ENCODE measurements at regions of chr5 and their contacts with region 1.

Region 1: DNA sequence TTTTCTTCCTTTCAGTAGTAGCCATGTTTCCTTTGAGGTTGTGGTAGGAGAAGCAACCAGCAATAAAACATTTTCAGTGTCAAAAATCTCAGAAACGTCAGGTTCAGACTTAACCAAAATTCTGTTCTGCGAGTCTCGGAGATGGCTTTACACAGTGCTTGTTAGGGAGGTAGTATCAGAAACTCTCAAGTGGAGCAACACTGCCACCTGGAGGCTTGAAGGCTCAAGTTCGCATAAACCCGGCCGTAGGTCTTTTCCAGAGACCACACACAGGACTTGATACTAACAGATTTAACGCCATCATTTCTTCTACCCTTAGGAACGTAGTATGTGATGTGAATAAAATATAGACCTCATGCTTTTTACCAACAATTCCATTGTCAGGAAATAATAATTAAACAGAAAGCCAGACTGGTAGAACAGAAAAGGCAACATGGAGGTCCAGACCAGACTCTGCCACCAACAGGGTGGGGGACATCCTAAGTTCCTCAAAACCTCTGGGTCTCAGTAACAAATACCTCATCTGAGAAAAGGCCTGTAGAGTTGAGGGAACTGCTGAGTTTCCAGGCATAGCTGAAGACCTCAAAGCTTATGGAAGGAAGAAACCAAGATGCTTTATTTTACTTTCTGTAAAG is 8.5 kb downstream of the PTGER4 start:
- DNase-seq: peak; percentile 60 to 89
- ATAC-seq: peak; percentile 89 to 96 (median 92)
- H3K4me3 ChIP-seq: peak overlapping the region in 7 of 10 donors; percentile 77 to 98 (median 93)
- H3K27ac ChIP-seq: peak overlapping the region in 9 of 10 donors; percentile 15 to 96 (median 44)
- H3K4me1 ChIP-seq: peaks cover 0 to 68% (median 45%) of the 10 kb centered on the region in 9 donors
- H3K27me3 ChIP-seq: peaks cover 0 to 5% (median 0%) of the 10 kb centered on the region in 7 donors
- CTCF ChIP-seq: peak; percentile 78 to 93 (median 87)

Region 2: DNA sequence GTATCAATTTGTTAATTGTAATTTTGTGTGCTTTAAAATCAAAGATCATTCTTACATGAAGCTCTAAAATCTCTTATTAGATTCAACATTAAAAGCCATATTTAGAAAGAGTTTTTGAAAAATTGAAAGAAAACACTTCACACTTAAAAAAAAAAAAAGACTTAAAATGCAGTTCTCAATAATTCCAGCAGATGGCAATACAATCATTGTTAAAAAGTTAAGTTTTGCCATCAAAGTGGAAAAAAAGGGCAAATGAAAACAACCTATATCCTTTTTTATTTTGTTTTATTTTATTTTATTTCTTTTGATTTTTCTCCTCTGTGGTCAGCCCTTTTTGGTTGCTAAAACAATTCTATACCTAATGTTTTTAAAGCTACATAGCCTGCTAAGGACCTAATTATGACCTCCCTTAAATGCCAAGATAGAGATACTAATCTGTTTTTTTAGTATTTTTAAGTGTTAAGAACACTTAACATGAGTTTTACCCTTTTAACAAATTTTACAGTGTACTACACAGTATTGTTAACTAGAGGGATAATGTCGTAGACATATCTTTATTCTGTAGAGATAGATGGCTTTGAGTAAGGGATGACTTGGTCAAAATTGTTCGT is 1109.3 kb before region 1 on chr5:
- intact Hi-C with region 1: loop called in 9 of 10 experiments (anchors 2 to 10 kb)
- DNase-seq: no peak
- ATAC-seq: no peak
- H3K4me3 ChIP-seq: no peak overlapping the region
- H3K27ac ChIP-seq: no peak overlapping the region
- H3K4me1 ChIP-seq: peaks cover 0 to 13% (median 9%) of the 10 kb centered on the region in 9 donors
- H3K27me3 ChIP-seq: peaks cover 0 to 5% (median 0%) of the 10 kb centered on the region in 7 donors
- CTCF ChIP-seq: peak; percentile 59 to 82 (median 75)

Region 3: GRCh38 chr5:39948867-39949468 is 739.3 kb before region 1 on chr5:
- intact Hi-C with region 1: loop called in 9 of 10 experiments (anchors 2 to 5 kb)
- DNase-seq: peak in 1 of 2 donors; percentile 64
- ATAC-seq: peak in 7 of 8 donors; percentile 66 to 79 (median 73)
- H3K4me3 ChIP-seq: no peak overlapping the region
- H3K27ac ChIP-seq: no peak overlapping the region
- H3K4me1 ChIP-seq: peaks cover 0 to 24% (median 0%) of the 10 kb centered on the region in 9 donors
- H3K27me3 ChIP-seq: no peaks in the 10 kb centered on the region
- CTCF ChIP-seq: peak; percentile 59 to 81 (median 74)

Region 4: GRCh38 chr5:40165794-40166728 is 522.2 kb before region 1 on chr5:
- intact Hi-C with region 1: loop called in 2 of 10 experiments (anchors 1 to 5 kb)
- DNase-seq: no peak
- ATAC-seq: no peak
- H3K4me3 ChIP-seq: no peak overlapping the region
- H3K27ac ChIP-seq: no peak overlapping the region
- H3K4me1 ChIP-seq: no peaks in the 10 kb centered on the region
- H3K27me3 ChIP-seq: no peaks in the 10 kb centered on the region
- CTCF ChIP-seq: peak in 5 of 9 donors; percentile 21 to 51 (median 32)

Region 5: DNA sequence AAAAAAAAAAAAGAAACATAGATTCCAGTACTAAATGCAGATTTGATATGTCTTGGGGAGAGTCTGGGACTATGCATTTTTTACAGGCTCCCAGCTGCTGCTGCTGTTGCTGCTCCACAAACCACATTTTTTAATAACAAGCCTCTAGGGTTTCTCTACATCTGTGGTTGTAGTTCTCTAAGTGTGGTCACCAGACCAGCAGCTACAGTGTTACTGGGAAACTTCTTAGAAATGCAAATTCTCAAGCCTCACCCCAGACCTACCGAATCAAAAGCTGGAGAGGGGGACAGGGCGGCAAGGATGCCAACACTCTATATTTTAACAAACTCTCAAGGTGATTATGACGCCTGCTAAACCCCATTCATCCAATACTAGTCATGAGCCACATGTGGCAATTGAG is 302.0 kb before region 1 on chr5:
- intact Hi-C with region 1: loop called in 1 of 10 experiments (anchors 10 kb)
- DNase-seq: no peak
- ATAC-seq: no peak
- H3K4me3 ChIP-seq: no peak overlapping the region
- H3K27ac ChIP-seq: peak overlapping the region in 1 of 10 donors; percentile 81
- H3K4me1 ChIP-seq: peaks cover 0 to 74% (median 11%) of the 10 kb centered on the region in 9 donors
- H3K27me3 ChIP-seq: no peaks in the 10 kb centered on the region
- CTCF ChIP-seq: no peak

Region 6: GRCh38 chr5:40410231-40410861 is 277.9 kb before region 1 on chr5:
- intact Hi-C with region 1: loop called in 5 of 10 experiments (anchors 5 to 10 kb)
- DNase-seq: peak in 1 of 2 donors; percentile 32
- ATAC-seq: peak in 7 of 8 donors; percentile 30 to 86 (median 63)
- H3K4me3 ChIP-seq: peak overlapping the region in 2 of 10 donors; percentile 7 to 24
- H3K27ac ChIP-seq: peak overlapping the region; percentile 1 to 88 (median 60)
- H3K4me1 ChIP-seq: peaks cover 4 to 78% (median 34%) of the 10 kb centered on the region in 9 donors
- H3K27me3 ChIP-seq: no peaks in the 10 kb centered on the region
- CTCF ChIP-seq: no peak

Region 7: DNA sequence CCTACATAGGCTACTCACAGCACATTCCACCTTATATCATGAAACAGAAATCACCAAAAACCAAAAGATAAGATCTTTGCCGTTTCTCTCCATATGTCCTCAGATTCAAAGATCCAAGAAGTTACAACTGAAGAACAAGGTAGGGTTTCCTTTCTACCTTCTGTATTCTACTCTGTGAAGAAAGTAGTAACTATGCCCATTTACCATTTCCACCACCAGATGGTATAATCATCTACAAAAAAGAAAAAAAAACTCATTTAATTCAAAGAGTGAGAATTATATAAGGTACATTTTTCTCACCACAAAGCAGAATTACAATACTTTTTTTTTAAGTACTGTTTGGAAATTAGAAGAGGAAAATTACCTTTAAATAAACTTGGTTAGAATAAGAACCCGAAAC is 181.1 kb before region 1 on chr5:
- intact Hi-C with region 1: loop called in 1 of 10 experiments (anchors 5 kb)
- DNase-seq: no peak
- ATAC-seq: no peak
- H3K4me3 ChIP-seq: no peak overlapping the region
- H3K27ac ChIP-seq: no peak overlapping the region
- H3K4me1 ChIP-seq: peaks cover 0 to 16% (median 0%) of the 10 kb centered on the region in 9 donors
- H3K27me3 ChIP-seq: no peaks in the 10 kb centered on the region
- CTCF ChIP-seq: peak in 4 of 9 donors; percentile 10 to 15 (median 12)

Measured in heart right ventricle (tissue), 16 donors.